WTC11 (cell line): ENCODE measurements at regions of chr17 and their contacts with region 1.

Region 1: GRCh38 chr17:59155439-59156182 is at the start of gene PRR11:
- DNase-seq: peak; percentile 91
- ATAC-seq: peak; percentile 93
- H3K4me3 Mint-ChIP-seq: no peak within 1 kb of the TSS
- H3K27ac Mint-ChIP-seq: no peak within 1 kb of the TSS
- H3K4me1 Mint-ChIP-seq: peaks cover 39% of the 10 kb centered on the region
- H3K27me3 Mint-ChIP-seq: no peaks in the 10 kb centered on the region
- CTCF ChIP-seq: no peak
- total RNA-seq, gene PRR11: 70.3 to 90.4 TPM (median 70.5 TPM) in 3 replicates

Region 2: DNA sequence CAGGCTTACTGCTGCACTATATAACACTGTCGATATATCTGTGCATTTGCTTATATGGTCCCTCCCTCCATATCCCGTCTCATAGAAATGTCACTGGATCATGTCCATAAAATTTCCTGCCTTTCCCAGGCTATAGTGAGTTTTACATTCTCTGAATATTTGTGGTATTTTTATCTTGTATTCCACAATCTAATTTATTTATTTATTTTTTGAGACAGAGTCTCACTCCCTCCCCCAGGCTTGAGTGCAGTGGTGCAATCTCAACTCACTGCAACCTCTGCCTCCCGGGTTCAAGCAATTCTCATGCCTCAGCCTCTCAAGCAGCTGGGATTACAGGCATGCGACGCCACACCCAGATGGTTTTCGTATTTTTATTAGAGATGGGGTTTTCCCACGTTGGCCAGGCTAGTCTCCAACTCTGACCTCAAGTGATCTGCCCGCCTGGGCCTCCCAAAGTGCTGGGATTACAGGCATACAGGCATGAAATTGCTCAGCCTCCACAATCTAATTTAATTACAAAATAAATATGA is 61.8 kb before region 1 on chr17:
- CTCF ChIA-PET with region 1: no interaction called
- POLR2A ChIA-PET with region 1: no interaction called
- DNase-seq: no peak
- ATAC-seq: no peak
- H3K4me3 Mint-ChIP-seq: no peak overlapping the region
- H3K27ac Mint-ChIP-seq: no peak overlapping the region; the same call in 1 of the 2 replicates
- H3K4me1 Mint-ChIP-seq: no peaks in the 10 kb centered on the region
- H3K27me3 Mint-ChIP-seq: no peaks in the 10 kb centered on the region
- CTCF ChIP-seq: no peak

Region 3: DNA sequence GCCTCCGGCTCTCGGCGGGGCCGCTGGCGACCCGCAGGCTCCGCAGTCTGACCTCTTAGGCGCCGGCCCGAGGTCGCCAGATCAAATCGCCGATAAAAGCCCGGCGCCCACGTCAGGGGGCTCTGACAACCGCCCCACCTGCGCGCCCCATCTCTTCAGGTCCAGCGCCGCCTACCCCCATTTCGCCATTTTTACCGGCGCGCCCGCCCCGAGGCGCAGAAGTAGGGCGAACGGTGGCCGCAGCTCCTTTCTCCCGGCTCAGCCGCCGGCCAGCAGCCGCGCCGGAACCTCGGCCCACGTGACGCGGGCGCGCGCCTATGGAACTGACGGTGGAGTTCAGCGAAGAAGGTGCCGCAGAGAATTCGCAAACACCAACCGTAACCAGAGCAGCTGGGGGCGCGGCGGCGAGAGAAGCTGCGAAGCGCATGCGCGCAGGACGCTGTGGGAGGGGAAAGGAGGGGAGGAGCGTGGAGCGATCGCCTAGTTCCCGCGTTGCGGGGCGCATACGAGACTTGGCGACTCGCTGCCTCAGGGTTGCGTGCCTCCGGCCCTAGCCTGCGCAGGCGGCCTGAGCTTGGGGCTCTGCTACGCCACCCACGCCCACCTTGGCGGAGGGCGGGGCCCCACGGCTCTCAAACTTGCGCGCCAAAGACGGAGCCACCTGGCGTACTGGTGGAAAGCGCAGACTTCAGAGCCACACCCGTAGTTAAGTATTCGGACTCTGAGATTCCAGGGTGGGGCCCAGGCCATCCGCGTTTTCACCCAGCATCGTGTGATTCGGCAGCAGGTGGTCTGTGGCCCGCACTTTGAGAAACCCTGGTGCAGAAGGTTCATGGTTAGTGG is 48.9 kb before region 1 on chr17 and contains the start of gene TRIM37:
- CTCF ChIA-PET with region 1: interaction called, 4 read pairs
- POLR2A ChIA-PET with region 1: interaction called, 23 read pairs
- DNase-seq: peak; percentile 98
- ATAC-seq: peak; percentile 98
- H3K4me3 Mint-ChIP-seq: peak within 1 kb of the TSS; percentile 94
- H3K27ac Mint-ChIP-seq: peak within 1 kb of the TSS; percentile 97
- H3K4me1 Mint-ChIP-seq: peaks cover 17% of the 10 kb centered on the region
- H3K27me3 Mint-ChIP-seq: no peaks in the 10 kb centered on the region
- CTCF ChIP-seq: no peak
- total RNA-seq, gene TRIM37: 62.3 to 67.2 TPM (median 65.1 TPM) in 3 replicates

Region 4: GRCh38 chr17:59139939-59140338 is 15.7 kb before region 1 on chr17:
- CTCF ChIA-PET with region 1: no interaction called
- POLR2A ChIA-PET with region 1: no interaction called
- DNase-seq: no peak
- ATAC-seq: no peak
- H3K4me3 Mint-ChIP-seq: no peak overlapping the region
- H3K27ac Mint-ChIP-seq: peak overlapping the region; percentile 47; the same call in 1 of the 2 replicates
- H3K4me1 Mint-ChIP-seq: 0 out of 2 replicates have a peak, but pooled peaks cover 3% of the 10 kb centered on the region
- H3K27me3 Mint-ChIP-seq: no peaks in the 10 kb centered on the region
- CTCF ChIP-seq: no peak

Region 5: GRCh38 chr17:59165902-59166342 is 10.3 kb after region 1 on chr17:
- CTCF ChIA-PET with region 1: interaction called, 18 read pairs
- POLR2A ChIA-PET with region 1: interaction called, 3 read pairs
- DNase-seq: peak; percentile 57
- ATAC-seq: peak; percentile 99
- H3K4me3 Mint-ChIP-seq: no peak overlapping the region
- H3K27ac Mint-ChIP-seq: peak overlapping the region; percentile 82
- H3K4me1 Mint-ChIP-seq: peaks cover 3% of the 10 kb centered on the region
- H3K27me3 Mint-ChIP-seq: no peaks in the 10 kb centered on the region
- CTCF ChIP-seq: peak; percentile 44; the same call in 1 of the 2 replicates

Region 6: GRCh38 chr17:59202320-59202719 is 46.7 kb after region 1 on chr17:
- CTCF ChIA-PET with region 1: no interaction called
- POLR2A ChIA-PET with region 1: no interaction called
- DNase-seq: no peak
- ATAC-seq: no peak
- H3K4me3 Mint-ChIP-seq: no peak overlapping the region
- H3K27ac Mint-ChIP-seq: no peak overlapping the region
- H3K4me1 Mint-ChIP-seq: no peaks in the 10 kb centered on the region
- H3K27me3 Mint-ChIP-seq: no peaks in the 10 kb centered on the region
- CTCF ChIP-seq: no peak

Region 7: GRCh38 chr17:59456933-59457573 is 301.4 kb after region 1 on chr17:
- CTCF ChIA-PET with region 1: no interaction called
- POLR2A ChIA-PET with region 1: no interaction called
- DNase-seq: no peak
- ATAC-seq: no peak
- H3K4me3 Mint-ChIP-seq: no peak overlapping the region
- H3K27ac Mint-ChIP-seq: no peak overlapping the region
- H3K4me1 Mint-ChIP-seq: no peaks in the 10 kb centered on the region
- H3K27me3 Mint-ChIP-seq: no peaks in the 10 kb centered on the region
- CTCF ChIP-seq: no peak